ACHN (cell line): ENCODE measurements at regions of chr2 and their contacts with region 1.

Region 1: GRCh38 chr2:85549826-85550225 is 10.9 kb downstream of the MAT2A start:
- DNase-seq: no peak

Region 2: GRCh38 chr2:85420536-85421259 is 129.1 kb before region 1 on chr2:
- in situ Hi-C with region 1: loop called (anchors 5 kb)
- DNase-seq: peak; percentile 75

Region 3: GRCh38 chr2:85741833-85742455 is 192.1 kb after region 1 on chr2:
- in situ Hi-C with region 1: no loop called
- DNase-seq: no peak

Region 4: GRCh38 chr2:85838181-85838580 is 288.4 kb after region 1 on chr2:
- in situ Hi-C with region 1: no loop called
- DNase-seq: no peak